Naive thymus-derived CD4-positive, alpha-beta T cell (primary cell): ENCODE measurements at regions of chr13 and their contacts with region 1.

Region 1: GRCh38 chr13:74287724-74288169 is 153.5 kb upstream of the KLF12 start:
- DNase-seq: peak; percentile 40 to 98 (median 90)
- ATAC-seq: peak; percentile 74
- H3K4me3 ChIP-seq: peak overlapping the region; percentile 51
- H3K4me3 Mint-ChIP-seq: peak overlapping the region; percentile 68 to 91 (median 82)
- H3K27ac ChIP-seq: peak overlapping the region; percentile 82
- H3K27ac Mint-ChIP-seq: peak overlapping the region; percentile 79 to 96 (median 94)
- H3K4me1 ChIP-seq: peaks cover 26 to 48% of the 10 kb centered on the region in 2 donors
- H3K4me1 Mint-ChIP-seq: peaks cover 41 to 77% (median 71%) of the 10 kb centered on the region in 7 donors
- H3K27me3 ChIP-seq: no peaks in the 10 kb centered on the region
- H3K27me3 Mint-ChIP-seq: peaks cover 0 to 2% (median 0%) of the 10 kb centered on the region in 5 donors

Region 2: GRCh38 chr13:73058736-73059459 is 1228.8 kb before region 1 on chr13 and contains the start of gene KLF5:
- CTCF ChIA-PET with region 1: no interaction called
- POLR2A ChIA-PET with region 1: no interaction called
- intact Hi-C with region 1: loop called (anchors 2 to 5 kb)
- DNase-seq: peak; percentile 93 to 98 (median 94)
- ATAC-seq: peak; percentile 98
- H3K4me3 ChIP-seq: peak within 1 kb of the TSS; percentile 58
- H3K4me3 Mint-ChIP-seq: peak within 1 kb of the TSS; percentile 82 to 94 (median 90)
- H3K27ac ChIP-seq: peak within 1 kb of the TSS; percentile 42
- H3K27ac Mint-ChIP-seq: peak within 1 kb of the TSS; percentile 38 to 92 (median 79)
- H3K4me1 ChIP-seq: peaks cover 4 to 10% of the 10 kb centered on the region in 2 donors
- H3K4me1 Mint-ChIP-seq: peaks cover 6 to 32% (median 23%) of the 10 kb centered on the region in 7 donors
- H3K27me3 ChIP-seq: peaks cover 5 to 10% of the 10 kb centered on the region in 2 donors
- H3K27me3 Mint-ChIP-seq: peaks cover 19 to 58% (median 40%) of the 10 kb centered on the region in 5 donors
- total RNA-seq, gene KLF5: 3.6 to 13.3 (median 5.7) TPM

Region 3: GRCh38 chr13:73754727-73755292 is 532.9 kb before region 1 on chr13:
- CTCF ChIA-PET with region 1: interaction called, 18 read pairs
- POLR2A ChIA-PET with region 1: interaction called, 4 read pairs
- intact Hi-C with region 1: loop called (anchors 1 kb)
- DNase-seq: peak in 7 of 9 donors; percentile 32 to 69 (median 59)
- ATAC-seq: peak; percentile 67
- H3K4me3 ChIP-seq: no peak overlapping the region
- H3K4me3 Mint-ChIP-seq: peak overlapping the region in 1 of 10 donors; percentile 5
- H3K27ac ChIP-seq: no peak overlapping the region
- H3K27ac Mint-ChIP-seq: peak overlapping the region; percentile 11 to 96 (median 79)
- H3K4me1 ChIP-seq: peaks cover 0 to 19% of the 10 kb centered on the region in 2 donors
- H3K4me1 Mint-ChIP-seq: peaks cover 13 to 76% (median 57%) of the 10 kb centered on the region in 7 donors
- H3K27me3 ChIP-seq: no peaks in the 10 kb centered on the region
- H3K27me3 Mint-ChIP-seq: no peaks in the 10 kb centered on the region

Region 4: DNA sequence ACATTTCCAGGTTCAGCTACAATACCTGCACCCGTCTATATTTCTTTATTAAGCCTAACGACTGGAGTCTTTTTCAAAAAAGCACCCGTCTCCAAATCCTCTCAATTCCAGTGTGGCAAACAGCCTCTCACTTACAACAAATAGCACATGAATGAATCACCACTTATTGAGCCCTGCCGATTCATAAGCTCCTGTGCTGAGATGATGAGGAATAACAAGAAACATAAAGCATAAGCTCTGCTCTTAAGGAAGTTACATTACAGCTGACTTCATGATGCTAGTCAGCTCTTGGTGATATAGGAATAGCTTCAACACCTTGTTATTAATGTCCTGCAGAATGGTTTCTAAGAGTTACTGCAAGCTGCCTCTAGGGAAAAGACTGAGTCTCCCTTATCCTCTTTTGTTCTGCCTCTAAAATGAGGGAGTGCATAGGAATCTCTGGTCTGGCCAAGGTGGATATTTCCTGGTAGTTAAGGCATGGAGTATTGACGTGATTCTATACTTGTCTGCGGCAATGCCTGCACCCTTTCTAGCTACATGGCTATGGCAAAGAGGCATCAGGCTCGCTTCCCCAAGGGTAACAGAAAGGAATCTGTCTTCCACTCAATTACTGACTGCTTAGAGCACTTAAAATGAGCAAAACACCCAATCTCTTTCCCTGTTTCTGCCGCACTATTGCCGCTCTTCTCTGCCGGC is 349.2 kb before region 1 on chr13:
- CTCF ChIA-PET with region 1: interaction called, 5 read pairs
- POLR2A ChIA-PET with region 1: no interaction called
- intact Hi-C with region 1: loop called (anchors 1 to 2 kb)
- DNase-seq: no peak
- ATAC-seq: no peak
- H3K4me3 ChIP-seq: no peak overlapping the region
- H3K4me3 Mint-ChIP-seq: no peak overlapping the region
- H3K27ac ChIP-seq: no peak overlapping the region
- H3K27ac Mint-ChIP-seq: peak overlapping the region in 3 of 9 donors; percentile 29 to 57 (median 33)
- H3K4me1 ChIP-seq: peaks cover 22 to 38% of the 10 kb centered on the region in 2 donors
- H3K4me1 Mint-ChIP-seq: peaks cover 40 to 94% (median 83%) of the 10 kb centered on the region in 7 donors
- H3K27me3 ChIP-seq: no peaks in the 10 kb centered on the region
- H3K27me3 Mint-ChIP-seq: no peaks in the 10 kb centered on the region

Region 5: DNA sequence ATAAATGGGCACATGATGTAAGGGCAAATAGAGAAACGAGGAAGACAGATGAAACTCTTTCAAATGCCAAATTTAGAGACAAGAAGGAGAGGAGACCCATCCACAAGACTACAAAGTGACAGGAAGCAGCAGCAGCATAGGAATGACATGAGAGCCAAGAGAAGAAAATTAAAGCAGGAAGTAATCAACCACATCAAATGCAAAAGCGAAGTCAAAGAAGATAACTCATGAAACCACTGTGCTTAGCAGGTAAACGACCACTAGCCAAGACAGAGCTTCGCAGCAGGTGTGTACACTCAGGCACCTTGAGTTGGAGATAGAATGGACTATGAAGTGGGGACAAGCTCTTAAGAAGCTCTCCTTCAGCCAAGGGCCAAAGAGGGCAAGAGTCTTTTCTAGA is 217.7 kb before region 1 on chr13:
- CTCF ChIA-PET with region 1: interaction called, 5 read pairs
- POLR2A ChIA-PET with region 1: interaction called, 3 read pairs
- intact Hi-C with region 1: loop called (anchors 1 kb)
- DNase-seq: peak in 7 of 9 donors; percentile 59 to 82 (median 79)
- ATAC-seq: peak; percentile 85
- H3K4me3 ChIP-seq: peak overlapping the region; percentile 32
- H3K4me3 Mint-ChIP-seq: peak overlapping the region; percentile 58 to 88 (median 74)
- H3K27ac ChIP-seq: no peak overlapping the region
- H3K27ac Mint-ChIP-seq: peak overlapping the region; percentile 56 to 93 (median 83)
- H3K4me1 ChIP-seq: peaks cover 46 to 51% of the 10 kb centered on the region in 2 donors
- H3K4me1 Mint-ChIP-seq: peaks cover 49 to 90% (median 83%) of the 10 kb centered on the region in 7 donors
- H3K27me3 ChIP-seq: no peaks in the 10 kb centered on the region
- H3K27me3 Mint-ChIP-seq: no peaks in the 10 kb centered on the region

Region 6: DNA sequence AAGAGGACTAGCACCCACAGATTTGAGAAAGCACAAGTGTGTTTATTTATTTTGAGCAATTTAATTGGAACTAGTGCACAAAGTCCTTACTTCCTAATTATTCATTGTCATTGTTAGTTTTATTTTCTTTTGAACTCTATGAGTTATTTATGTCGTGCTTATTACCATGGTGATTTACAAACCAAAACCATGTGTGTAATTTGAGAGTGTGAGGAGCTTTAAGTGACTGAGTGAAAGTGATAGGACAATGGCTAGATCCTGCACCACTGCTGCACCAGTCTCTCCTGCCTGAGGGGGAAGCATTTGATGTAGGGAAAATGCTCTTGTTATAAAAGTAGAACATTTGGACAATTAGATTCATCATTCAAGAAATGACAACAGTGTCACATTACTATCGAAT is 18.7 kb after region 1 on chr13:
- CTCF ChIA-PET with region 1: interaction called, 4 read pairs
- POLR2A ChIA-PET with region 1: no interaction called
- intact Hi-C with region 1: loop called in 1 of 2 experiments (anchors 2 kb)
- DNase-seq: no peak
- ATAC-seq: no peak
- H3K4me3 ChIP-seq: no peak overlapping the region
- H3K4me3 Mint-ChIP-seq: no peak overlapping the region
- H3K27ac ChIP-seq: no peak overlapping the region
- H3K27ac Mint-ChIP-seq: no peak overlapping the region
- H3K4me1 ChIP-seq: no peaks in the 10 kb centered on the region
- H3K4me1 Mint-ChIP-seq: peaks cover 0 to 7% (median 0%) of the 10 kb centered on the region in 7 donors
- H3K27me3 ChIP-seq: no peaks in the 10 kb centered on the region
- H3K27me3 Mint-ChIP-seq: no peaks in the 10 kb centered on the region

Region 7: DNA sequence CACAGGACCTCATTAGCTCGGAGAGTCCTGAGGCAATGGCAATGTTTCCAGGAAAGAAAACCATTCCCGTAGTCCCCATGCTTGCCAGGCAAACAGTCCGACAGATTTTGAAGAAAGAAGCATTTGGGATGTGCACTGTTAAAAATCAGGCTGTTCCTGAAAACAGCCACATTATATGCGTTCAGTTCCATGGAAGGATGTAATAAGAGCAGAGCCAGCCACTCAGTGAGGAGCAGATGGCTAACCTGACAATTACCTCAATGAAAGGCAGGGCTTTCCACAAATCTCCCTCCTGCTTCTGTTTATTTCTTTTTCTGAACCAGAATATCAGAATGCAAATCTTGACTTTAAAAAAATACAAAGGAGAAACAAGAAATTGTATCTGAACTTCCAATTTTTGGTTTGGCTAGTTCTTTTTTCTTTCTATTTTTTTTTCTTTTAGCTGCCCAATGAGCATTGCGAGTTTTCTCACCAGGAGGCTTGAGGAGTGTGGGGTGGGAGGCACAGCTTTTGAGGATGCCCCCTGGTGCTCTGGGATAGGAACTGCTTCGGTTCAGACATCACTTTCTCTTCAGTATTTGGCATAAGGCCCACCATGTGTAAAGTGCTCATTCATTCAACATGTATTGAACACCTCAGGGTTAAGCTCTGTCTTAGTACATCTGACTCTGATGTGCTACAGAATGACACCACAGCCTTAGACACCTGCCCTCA is 1070.0 kb after region 1 on chr13:
- CTCF ChIA-PET with region 1: no interaction called
- POLR2A ChIA-PET with region 1: no interaction called
- intact Hi-C with region 1: no loop called
- DNase-seq: peak; percentile 7 to 76 (median 64)
- ATAC-seq: peak; percentile 97
- H3K4me3 ChIP-seq: no peak overlapping the region
- H3K4me3 Mint-ChIP-seq: no peak overlapping the region
- H3K27ac ChIP-seq: no peak overlapping the region
- H3K27ac Mint-ChIP-seq: peak overlapping the region in 1 of 9 donors; percentile 59
- H3K4me1 ChIP-seq: no peaks in the 10 kb centered on the region
- H3K4me1 Mint-ChIP-seq: peaks cover 0 to 7% (median 5%) of the 10 kb centered on the region in 7 donors
- H3K27me3 ChIP-seq: no peaks in the 10 kb centered on the region
- H3K27me3 Mint-ChIP-seq: peaks cover 0 to 4% (median 0%) of the 10 kb centered on the region in 5 donors